CD14-positive monocyte (primary cell): ENCODE measurements at regions of chr7 and their contacts with region 1.

Region 1: DNA sequence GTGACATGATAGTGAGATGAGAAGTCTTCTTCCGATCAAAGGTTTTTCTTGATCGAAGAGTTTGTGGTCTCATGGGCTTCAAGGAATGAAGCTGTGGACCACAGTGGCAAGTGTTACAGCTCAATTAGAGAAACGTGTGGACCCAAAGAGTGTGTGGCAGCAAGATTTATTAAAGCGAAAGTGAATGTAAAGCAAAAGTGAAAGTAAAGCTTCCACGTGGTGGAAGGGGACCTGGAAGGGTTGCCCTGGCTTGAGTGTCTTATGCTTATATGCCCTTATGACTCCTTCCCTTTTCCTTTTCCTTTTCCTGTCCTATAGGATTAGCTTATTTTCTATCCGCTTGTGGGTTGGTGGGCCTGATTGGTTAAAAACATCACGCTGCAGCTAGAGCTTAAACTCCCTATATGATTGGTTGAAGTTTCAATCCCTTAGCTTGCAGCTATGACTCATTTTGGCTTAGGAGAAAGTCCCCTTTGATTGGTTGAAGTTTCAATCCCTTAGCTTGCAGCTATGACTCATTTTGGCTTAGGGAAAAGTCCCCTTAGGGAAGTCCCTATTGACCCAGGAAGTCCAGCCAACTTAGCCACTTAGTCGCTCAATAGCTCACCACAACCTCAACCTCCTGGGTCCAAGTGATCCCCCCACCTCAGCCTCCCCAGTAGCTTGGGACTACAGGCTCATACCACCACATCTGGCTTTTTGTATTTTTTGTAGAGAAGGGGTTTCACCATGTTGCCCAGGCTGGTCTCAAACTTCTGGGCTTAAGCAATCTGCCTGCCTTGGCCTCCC is 34.7 kb downstream of the MRPS24 start:
- DNase-seq: peak; percentile 77 to 93 (median 84)
- H3K4me3 ChIP-seq: peak overlapping the region; percentile 8 to 65 (median 64)
- H3K4me3 Mint-ChIP-seq: peak overlapping the region; percentile 62 to 83
- H3K27ac ChIP-seq: peak overlapping the region; percentile 31 to 65
- H3K27ac Mint-ChIP-seq: peak overlapping the region; percentile 60 to 89 (median 82)
- H3K4me1 ChIP-seq: peaks cover 10 to 13% of the 10 kb centered on the region in 2 donors
- H3K4me1 Mint-ChIP-seq: peaks cover 17% of the 10 kb centered on the region
- H3K27me3 ChIP-seq: no peaks in the 10 kb centered on the region
- H3K27me3 Mint-ChIP-seq: peaks cover 0 to 4% (median 3%) of the 10 kb centered on the region in 3 donors
- CTCF ChIP-seq: no peak

Region 2: DNA sequence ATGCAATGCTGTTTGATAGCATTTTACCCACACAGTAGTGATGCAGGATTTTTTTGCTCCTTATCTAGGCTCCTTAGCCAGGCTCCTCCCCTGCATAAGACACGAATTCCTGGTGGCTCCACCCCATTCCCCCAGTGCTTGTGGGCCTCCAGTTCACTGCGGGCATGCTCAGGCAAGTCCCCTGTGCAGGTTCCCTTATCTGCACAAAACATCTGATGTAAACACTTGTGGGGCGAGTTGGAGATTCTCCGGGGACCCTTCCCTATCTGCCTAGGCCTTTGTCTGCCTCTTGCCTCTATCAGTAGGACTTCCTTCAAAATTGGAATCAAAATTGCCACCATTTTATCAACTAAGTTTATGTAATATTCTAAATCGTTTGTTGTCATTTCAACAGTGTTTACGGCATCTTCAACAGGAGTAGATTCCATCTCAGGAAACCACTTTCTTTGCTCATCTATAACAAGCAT is 257.1 kb before region 1 on chr7:
- intact Hi-C with region 1: loop called (anchors 2 to 5 kb)
- DNase-seq: no peak
- H3K4me3 ChIP-seq: no peak overlapping the region
- H3K4me3 Mint-ChIP-seq: no peak overlapping the region
- H3K27ac ChIP-seq: no peak overlapping the region
- H3K27ac Mint-ChIP-seq: no peak overlapping the region
- H3K4me1 ChIP-seq: peaks cover 11 to 12% of the 10 kb centered on the region in 2 donors
- H3K4me1 Mint-ChIP-seq: peaks cover 13% of the 10 kb centered on the region
- H3K27me3 ChIP-seq: peaks cover 12 to 14% of the 10 kb centered on the region in 2 donors
- H3K27me3 Mint-ChIP-seq: peaks cover 15 to 21% (median 16%) of the 10 kb centered on the region in 3 donors
- CTCF ChIP-seq: no peak

Region 3: DNA sequence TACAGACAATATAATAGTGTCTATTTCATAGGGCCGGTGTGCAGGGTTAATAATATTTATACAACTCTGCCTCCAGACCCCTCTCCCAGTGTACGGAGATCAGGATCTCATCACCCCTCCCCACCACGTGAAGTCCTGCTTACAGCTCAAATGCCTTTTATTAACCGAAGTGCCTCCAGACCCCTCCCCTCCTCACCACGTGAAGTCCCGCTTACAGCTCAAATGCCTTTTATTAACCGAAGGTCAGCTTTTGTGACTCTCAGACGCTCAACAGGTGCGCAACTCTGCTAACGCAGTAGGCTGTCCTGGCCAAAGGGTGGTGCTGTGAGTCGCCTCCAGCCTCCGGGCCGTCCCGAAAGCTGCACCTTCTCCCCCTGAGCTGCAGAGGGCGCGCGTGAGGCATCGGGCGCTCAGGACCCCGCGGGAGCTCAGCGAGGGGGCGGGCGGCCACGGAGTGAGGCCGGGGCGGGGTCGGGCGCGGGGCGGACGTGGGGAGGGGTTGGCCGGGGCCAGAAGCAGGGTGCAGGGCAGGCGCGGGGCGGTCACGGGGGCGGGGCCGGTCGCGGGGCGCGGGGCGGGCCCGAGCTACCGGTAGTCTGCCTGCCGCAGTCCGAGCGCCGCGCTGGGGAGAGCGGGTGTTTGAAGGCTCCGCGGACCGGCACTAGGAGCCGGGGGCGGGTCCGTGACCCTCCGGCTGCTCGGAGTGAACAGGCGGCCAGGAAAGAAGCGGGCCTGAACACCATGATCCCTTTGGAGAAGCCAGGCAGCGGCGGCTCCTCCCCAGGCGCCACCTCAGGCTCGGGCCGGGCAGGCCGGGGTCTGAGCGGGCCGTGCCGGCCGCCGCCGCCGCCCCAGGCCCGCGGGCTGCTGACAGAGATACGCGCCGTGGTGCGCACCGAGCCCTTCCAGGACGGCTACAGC is 251.9 kb before region 1 on chr7 and contains the start of gene STK17A:
- intact Hi-C with region 1: loop called (anchors 2 to 5 kb)
- DNase-seq: peak; percentile 88 to 94 (median 92)
- H3K4me3 ChIP-seq: peak within 1 kb of the TSS; percentile 84 to 97 (median 92)
- H3K4me3 Mint-ChIP-seq: peak within 1 kb of the TSS; percentile 91 to 96
- H3K27ac ChIP-seq: peak within 1 kb of the TSS; percentile 62 to 77
- H3K27ac Mint-ChIP-seq: peak within 1 kb of the TSS; percentile 64 to 88 (median 83)
- H3K4me1 ChIP-seq: peaks cover 18 to 26% of the 10 kb centered on the region in 2 donors
- H3K4me1 Mint-ChIP-seq: peaks cover 25% of the 10 kb centered on the region
- H3K27me3 ChIP-seq: peaks cover 12 to 14% of the 10 kb centered on the region in 2 donors
- H3K27me3 Mint-ChIP-seq: peaks cover 16 to 23% (median 18%) of the 10 kb centered on the region in 3 donors
- CTCF ChIP-seq: peak; percentile 95
- polyA plus RNA-seq, gene STK17A: 2.8 to 14.1 (median 9.5) TPM

Region 4: DNA sequence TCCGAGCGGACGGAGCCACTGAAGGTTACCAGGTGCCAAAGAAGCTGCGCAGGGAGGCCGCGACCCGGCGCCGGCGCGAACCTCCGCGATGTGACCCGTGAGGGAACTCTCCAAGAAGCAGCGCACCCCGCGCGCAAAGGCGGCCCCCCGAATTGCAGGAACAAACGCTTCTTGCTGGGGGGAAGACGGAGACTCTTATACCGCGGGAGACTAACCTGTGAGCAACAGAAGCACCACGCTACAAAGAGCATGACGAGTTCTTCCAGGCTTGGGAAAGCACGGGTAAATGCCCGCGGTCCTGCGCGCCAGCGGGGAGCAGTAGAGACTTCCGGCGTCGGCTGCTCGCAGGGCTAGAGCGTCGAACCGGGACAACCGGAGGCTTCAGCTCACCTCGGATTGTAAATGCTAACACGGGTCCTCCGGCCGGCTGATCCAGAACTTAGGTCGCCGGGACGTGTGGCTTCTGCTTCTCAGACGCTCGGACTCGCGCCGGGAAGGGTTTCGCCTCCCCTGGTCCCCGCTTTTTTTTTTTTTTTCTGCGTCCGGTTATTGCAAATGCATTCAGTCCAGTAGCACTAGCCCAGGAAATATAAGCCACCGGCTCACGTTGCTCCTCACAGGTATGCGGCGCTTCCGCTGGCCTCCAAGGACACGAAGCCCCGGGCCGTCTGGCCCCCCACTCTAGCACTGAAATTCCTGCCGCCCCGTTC is 105.3 kb before region 1 on chr7 and contains the start of gene COA1:
- intact Hi-C with region 1: loop called in 1 of 2 experiments (anchors 10 kb)
- DNase-seq: peak; percentile 83 to 91 (median 84)
- H3K4me3 ChIP-seq: peak within 1 kb of the TSS; percentile 58 to 92 (median 64)
- H3K4me3 Mint-ChIP-seq: peak within 1 kb of the TSS; percentile 91 to 94
- H3K27ac ChIP-seq: peak within 1 kb of the TSS; percentile 41 to 89
- H3K27ac Mint-ChIP-seq: peak within 1 kb of the TSS; percentile 83 to 92 (median 89)
- H3K4me1 ChIP-seq: peaks cover 11 to 22% of the 10 kb centered on the region in 2 donors
- H3K4me1 Mint-ChIP-seq: peaks cover 35% of the 10 kb centered on the region
- H3K27me3 ChIP-seq: no peaks in the 10 kb centered on the region
- H3K27me3 Mint-ChIP-seq: peaks cover 0 to 3% (median 2%) of the 10 kb centered on the region in 3 donors
- CTCF ChIP-seq: no peak
- polyA plus RNA-seq, gene COA1: 25.6 to 57.8 (median 56.2) TPM

Region 5: DNA sequence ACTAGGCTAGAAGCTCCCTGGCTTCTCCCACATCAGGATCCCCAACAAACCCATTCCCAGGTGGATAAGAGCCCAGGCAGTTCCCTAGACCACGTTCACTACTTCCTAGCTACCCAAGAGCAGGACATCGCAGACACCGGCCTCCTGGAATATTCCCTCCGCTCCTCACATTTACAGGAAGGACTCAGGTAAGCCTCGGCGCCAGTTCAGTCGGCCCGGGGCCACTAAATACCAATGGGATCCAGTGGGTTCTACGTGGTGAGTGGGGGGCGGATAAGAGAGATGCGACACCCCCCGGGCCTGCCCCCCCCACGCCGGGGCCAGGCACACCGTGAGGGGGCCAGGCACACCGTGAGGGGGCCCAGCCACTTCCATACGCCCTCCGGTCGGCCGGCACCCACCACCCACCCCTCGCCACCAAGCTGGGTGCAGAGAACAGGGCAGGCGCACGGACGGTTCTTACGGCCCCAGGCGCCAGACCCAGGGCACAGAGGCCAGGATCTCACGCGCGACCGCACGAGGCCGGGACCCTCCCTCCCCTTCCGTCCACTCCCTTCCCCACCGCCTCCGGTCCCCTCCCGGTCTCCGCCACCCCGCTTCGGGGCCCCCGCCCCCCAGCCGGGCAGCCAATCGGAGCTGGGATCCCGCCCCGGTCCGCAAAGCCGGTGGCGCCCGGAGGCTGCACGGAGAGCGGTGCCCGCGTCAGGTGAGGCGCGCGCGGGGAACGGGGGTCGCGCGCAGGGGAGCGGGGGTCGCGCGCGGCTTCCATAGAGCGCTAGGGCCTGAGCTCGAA is 76.4 kb before region 1 on chr7 and contains the start of gene BLVRA:
- intact Hi-C with region 1: loop called in 1 of 2 experiments (anchors 10 kb)
- DNase-seq: peak; percentile 46 to 68 (median 48)
- H3K4me3 ChIP-seq: peak within 1 kb of the TSS; percentile 59 to 98 (median 90)
- H3K4me3 Mint-ChIP-seq: peak within 1 kb of the TSS; percentile 83 to 94
- H3K27ac ChIP-seq: peak within 1 kb of the TSS; percentile 19 to 92
- H3K27ac Mint-ChIP-seq: peak within 1 kb of the TSS; percentile 18 to 90 (median 73)
- H3K4me1 ChIP-seq: peaks cover 78 to 91% of the 10 kb centered on the region in 2 donors
- H3K4me1 Mint-ChIP-seq: peaks cover 75% of the 10 kb centered on the region
- H3K27me3 ChIP-seq: no peaks in the 10 kb centered on the region
- H3K27me3 Mint-ChIP-seq: peaks cover 0 to 6% (median 2%) of the 10 kb centered on the region in 3 donors
- CTCF ChIP-seq: no peak
- polyA plus RNA-seq, gene BLVRA: 71.9 to 238 (median 199) TPM

Region 6: DNA sequence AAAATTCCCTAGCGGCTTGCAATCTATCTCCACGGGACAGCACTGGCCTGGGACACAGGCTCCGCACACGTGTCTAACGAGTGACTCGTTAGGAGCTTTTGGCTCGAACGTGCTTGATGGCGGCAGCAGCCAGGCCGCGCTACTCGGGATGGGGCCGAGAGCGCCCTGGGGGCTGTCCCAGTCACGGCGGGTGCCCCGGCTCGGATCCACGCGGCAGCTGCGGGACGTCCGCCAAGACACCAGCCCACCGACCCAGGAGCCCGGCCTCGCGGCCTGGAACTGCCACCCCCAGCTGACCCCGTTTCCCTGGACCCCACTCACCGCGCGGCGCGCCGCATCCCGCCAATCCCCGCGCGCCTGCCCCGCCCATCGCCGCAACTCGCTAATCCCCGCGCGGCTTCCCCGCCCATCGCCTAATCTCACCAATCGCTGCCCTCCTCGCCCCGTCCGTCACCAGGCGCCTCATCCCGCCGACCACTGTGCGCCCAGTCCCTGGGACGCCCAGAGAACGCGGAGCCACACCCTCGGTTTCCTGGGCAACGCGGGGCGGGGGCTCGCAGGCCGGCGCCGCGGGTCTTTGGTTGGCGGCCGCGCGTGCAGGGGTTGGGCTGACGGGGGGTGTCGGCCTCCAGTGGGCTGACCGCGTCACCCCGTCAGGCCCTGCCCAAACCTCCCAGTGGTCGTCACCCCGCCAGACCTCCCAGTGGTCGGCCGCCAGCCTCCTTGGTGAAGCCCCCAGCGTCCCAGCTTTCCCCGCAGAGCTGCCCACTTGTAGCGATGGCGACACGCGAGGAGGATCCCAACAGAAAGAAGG is 288.7 kb after region 1 on chr7 and contains the start of gene POLD2:
- intact Hi-C with region 1: no loop called
- DNase-seq: peak; percentile 91 to 94 (median 93)
- H3K4me3 ChIP-seq: peak within 1 kb of the TSS; percentile 70 to 90 (median 85)
- H3K4me3 Mint-ChIP-seq: peak within 1 kb of the TSS; percentile 73 to 94
- H3K27ac ChIP-seq: peak within 1 kb of the TSS; percentile 14 to 85
- H3K27ac Mint-ChIP-seq: peak within 1 kb of the TSS; percentile 70 to 91 (median 78)
- H3K4me1 ChIP-seq: peaks cover 14 to 16% of the 10 kb centered on the region in 2 donors
- H3K4me1 Mint-ChIP-seq: peaks cover 15% of the 10 kb centered on the region
- H3K27me3 ChIP-seq: no peaks in the 10 kb centered on the region
- H3K27me3 Mint-ChIP-seq: peaks cover 0 to 4% (median 0%) of the 10 kb centered on the region in 3 donors
- CTCF ChIP-seq: no peak
- polyA plus RNA-seq, gene POLD2: 24.1 to 27.1 (median 25.7) TPM

Region 7: DNA sequence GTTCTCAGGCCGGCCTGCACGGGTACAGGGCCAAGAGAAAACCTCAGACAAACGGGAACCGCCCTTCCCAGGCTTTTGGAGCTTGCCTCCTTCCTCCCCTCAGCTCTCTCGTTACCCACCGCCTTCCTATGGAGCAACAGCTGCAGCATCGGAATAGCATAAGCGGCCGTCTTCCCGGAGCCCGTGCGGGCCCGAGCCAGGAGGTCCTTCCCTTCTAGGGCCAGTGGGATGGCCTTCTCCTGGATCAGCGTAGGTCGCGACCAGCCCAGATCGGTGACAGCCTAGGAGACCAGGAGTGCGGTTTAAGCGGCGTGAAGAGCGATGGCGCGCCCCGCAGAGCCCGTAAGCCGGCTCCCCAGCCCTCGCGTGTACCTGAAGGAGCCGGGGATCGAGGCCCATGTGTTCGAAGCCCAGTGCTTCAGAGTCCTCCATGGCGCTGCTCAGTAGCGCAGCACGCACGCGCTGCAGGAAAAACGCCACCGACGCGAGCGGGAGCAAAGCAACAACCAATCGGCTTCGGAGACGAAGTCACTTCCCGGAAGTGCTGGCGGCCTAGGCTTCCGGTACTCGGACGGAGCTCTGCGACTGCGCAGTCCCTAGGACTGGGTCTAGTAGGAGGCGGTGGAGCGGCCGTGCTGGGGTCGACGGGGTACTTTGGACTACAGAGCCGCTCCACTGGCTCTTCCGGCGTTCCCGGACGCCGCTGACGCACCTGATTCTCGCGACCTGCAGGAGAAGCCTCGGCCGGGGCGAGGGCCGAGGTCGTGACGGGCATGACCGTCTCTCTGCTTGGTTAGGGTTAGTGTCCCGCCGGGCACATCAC is 739.0 kb after region 1 on chr7 and contains the start of gene DDX56:
- intact Hi-C with region 1: loop called in 1 of 2 experiments (anchors 10 kb)
- DNase-seq: peak; percentile 93 to 99 (median 93)
- H3K4me3 ChIP-seq: peak within 1 kb of the TSS; percentile 65 to 88 (median 80)
- H3K4me3 Mint-ChIP-seq: peak within 1 kb of the TSS; percentile 93 to 98
- H3K27ac ChIP-seq: peak within 1 kb of the TSS; percentile 75 to 97
- H3K27ac Mint-ChIP-seq: peak within 1 kb of the TSS; percentile 95 to 99 (median 97)
- H3K4me1 ChIP-seq: peaks cover 20 to 23% of the 10 kb centered on the region in 2 donors
- H3K4me1 Mint-ChIP-seq: peaks cover 26% of the 10 kb centered on the region
- H3K27me3 ChIP-seq: no peaks in the 10 kb centered on the region
- H3K27me3 Mint-ChIP-seq: no peaks in the 10 kb centered on the region
- CTCF ChIP-seq: no peak
- polyA plus RNA-seq, gene DDX56: 32.2 to 69.3 (median 33.9) TPM